OCI-LY7 (cell line): ENCODE measurements at regions of chr6 and their contacts with region 1.

Region 1: DNA sequence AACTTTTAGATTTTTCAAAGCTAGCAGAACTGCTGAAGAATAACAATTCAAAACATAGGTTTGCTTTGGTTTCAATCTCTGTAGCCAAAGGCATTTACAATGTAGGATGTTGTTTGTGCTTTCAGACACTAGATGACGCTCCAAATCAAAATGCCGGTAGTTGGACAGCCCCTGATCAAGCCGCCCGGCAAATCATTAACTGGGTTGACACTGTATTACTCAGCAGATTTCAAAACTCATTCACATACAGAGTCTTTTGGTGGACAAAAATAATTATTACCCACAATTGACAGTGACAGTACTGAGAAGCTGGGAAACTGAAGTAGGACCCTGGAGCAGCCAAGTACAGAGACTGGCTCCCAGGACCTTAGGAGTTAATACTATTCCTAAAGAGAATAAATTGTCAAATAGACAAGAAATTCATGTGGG is 21.3 kb upstream of the HFE start:
- DNase-seq: peak; percentile 79
- H3K4me3 ChIP-seq: no peak overlapping the region
- H3K27ac ChIP-seq: no peak overlapping the region
- H3K4me1 ChIP-seq: peaks cover 8% of the 10 kb centered on the region
- CTCF ChIP-seq: peak; percentile 98

Region 2: DNA sequence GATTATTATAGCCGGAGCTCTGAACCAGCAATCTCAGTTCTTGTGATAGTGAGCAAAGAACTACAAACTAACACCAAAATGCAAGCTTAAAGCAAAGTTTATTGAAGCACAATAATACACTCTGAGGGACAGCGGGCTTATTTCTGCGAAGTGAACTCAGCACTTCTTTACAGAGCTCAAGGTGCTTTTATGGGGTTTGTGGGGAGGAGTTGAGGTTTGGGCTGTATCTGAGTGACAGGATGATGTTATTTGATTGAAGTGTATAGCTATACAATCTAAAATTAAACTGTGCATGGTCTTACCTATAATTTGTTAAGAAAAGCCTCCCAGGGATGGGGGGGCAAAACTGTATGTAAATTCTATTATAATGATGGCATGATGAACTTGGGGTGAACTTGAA is 20.2 kb after region 1 on chr6:
- CTCF ChIA-PET with region 1: interaction called, 6 read pairs
- POLR2A ChIA-PET with region 1: interaction called, 10 read pairs
- intact Hi-C with region 1: no loop called
- DNase-seq: no peak
- H3K4me3 ChIP-seq: no peak overlapping the region
- H3K27ac ChIP-seq: no peak overlapping the region
- H3K4me1 ChIP-seq: peaks cover 19% of the 10 kb centered on the region
- CTCF ChIP-seq: no peak

Region 3: GRCh38 chr6:26097268-26097875 is 31.4 kb after region 1 on chr6:
- CTCF ChIA-PET with region 1: interaction called, 10 read pairs
- POLR2A ChIA-PET with region 1: interaction called, 38 read pairs
- intact Hi-C with region 1: loop called (anchors 1 kb)
- DNase-seq: peak; percentile 78
- H3K4me3 ChIP-seq: no peak overlapping the region
- H3K27ac ChIP-seq: no peak overlapping the region
- H3K4me1 ChIP-seq: peaks cover 8% of the 10 kb centered on the region
- CTCF ChIP-seq: peak; percentile 99

Region 4: GRCh38 chr6:26234421-26235296 is 168.7 kb after region 1 on chr6:
- CTCF ChIA-PET with region 1: no interaction called
- POLR2A ChIA-PET with region 1: no interaction called
- intact Hi-C with region 1: no loop called
- DNase-seq: peak; percentile 90
- H3K4me3 ChIP-seq: peak overlapping the region; percentile 69
- H3K27ac ChIP-seq: peak overlapping the region; percentile 92
- H3K4me1 ChIP-seq: peaks cover 26% of the 10 kb centered on the region
- CTCF ChIP-seq: no peak